Aorta (tissue), 5 donors: ENCODE measurements at regions of chr7 and their contacts with region 1.

Region 1: GRCh38 chr7:158818325-158819213 is 10.7 kb downstream of the ESYT2 start:
- DNase-seq: peak; percentile 94 to 96
- ATAC-seq: peak; percentile 90
- H3K4me3 ChIP-seq: no peak overlapping the region
- H3K27ac ChIP-seq: peak overlapping the region; percentile 44 to 94
- H3K4me1 ChIP-seq: peaks cover 3 to 7% of the 10 kb centered on the region in 2 donors
- H3K27me3 ChIP-seq: no peaks in the 10 kb centered on the region

Region 2: DNA sequence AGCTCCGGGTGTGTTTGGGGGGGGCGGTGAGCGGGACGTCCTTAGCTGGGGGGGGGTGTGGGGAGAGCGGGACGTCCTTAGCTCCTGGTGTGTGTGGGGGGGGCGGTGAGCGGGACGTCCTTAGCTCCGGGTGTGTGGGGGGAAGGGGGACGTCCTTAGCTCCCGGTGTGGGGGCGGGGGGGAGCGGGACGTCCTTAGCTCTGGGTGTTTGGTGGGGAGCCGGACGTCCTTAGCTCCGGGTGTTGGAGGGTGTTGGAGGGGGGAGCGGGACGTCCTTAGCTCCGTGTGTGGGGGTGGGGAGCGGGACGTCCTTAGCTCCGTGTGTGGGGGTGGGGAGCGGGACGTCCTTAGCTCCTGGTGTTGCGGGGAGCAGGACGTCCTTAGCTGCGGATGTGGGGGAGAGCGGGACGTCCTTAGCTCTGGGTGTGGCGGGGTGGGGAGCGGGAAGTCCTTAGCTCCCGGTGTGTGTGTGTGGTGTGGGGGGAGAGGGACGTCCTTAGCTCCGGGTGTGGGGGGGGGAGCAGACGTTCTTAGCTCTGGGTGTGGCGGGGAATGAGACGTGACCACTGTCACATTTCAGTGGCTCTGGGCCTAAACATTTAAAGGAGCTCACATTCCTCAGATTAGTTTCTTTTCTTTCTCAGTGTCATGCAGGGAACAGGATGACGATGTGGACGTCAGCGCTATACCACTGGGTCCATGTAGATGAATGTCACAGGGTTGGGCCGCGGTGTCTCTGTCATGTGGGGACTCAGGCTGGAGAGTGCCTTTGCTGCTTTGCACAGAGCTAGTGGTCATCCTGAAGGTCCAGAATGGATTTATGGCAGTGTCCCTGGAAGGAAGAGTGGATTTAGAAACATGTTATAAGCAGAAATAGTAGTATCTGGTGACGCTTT is 45.3 kb after region 1 on chr7:
- intact Hi-C with region 1: no loop called
- DNase-seq: peak; percentile 86
- ATAC-seq: peak; percentile 87
- H3K4me3 ChIP-seq: peak overlapping the region; percentile 47 to 50
- H3K27ac ChIP-seq: peak overlapping the region in 1 of 2 donors; percentile 51
- H3K4me1 ChIP-seq: no peaks in the 10 kb centered on the region
- H3K27me3 ChIP-seq: no peaks in the 10 kb centered on the region

Region 3: DNA sequence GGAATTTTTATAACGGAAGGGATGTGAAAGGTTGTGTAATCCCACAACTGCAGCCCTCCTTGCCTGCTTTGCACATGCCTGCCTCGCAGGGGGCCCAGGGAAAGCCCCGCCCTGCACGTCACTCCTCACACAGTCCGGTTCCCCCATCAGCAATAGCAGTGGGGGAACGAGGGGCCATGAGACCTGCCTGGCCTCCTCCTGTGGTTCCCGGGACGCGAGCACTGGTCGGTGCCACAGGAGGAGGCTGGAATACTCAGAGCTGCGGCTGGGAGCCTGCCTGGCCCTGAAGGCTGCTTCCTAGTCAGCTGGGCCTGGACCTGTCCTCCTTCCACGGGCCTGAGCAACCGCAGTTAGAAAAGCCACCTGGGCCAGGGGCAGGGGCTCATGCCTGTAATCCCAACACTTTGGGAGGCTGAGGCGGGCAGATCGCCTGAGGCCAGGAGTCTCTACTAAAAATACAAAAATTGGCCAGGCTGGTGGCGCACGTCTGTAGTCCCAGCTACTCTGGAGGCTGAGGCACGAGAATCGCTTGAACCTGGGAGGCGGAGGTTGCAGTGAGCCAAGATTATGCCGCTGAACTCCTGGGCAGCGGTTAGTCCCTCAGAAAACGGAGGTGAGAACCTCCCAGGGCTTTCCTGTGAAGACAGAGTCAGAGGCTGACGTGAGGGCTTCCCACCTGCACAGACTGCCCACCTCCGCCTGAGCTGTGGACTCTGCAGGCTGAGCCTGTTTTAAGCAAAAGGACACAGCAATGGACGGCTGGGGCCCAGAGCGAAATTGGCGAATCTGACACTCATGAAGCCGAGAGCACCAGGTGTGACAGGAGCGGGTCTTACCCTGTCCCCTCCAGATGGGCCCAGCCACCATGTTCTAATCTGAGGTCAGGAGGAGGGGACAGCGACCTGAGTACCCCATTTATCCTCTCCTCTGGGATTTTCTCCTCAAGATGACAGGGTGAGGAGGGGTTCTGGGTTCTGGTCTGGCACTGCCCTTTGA is 273.2 kb after region 1 on chr7:
- intact Hi-C with region 1: loop called in 1 of 2 experiments (anchors 2 kb)
- DNase-seq: peak in 1 of 2 donors; percentile 64
- ATAC-seq: peak; percentile 1
- H3K4me3 ChIP-seq: no peak overlapping the region
- H3K27ac ChIP-seq: peak overlapping the region; percentile 62 to 89
- H3K4me1 ChIP-seq: no peaks in the 10 kb centered on the region
- H3K27me3 ChIP-seq: no peaks in the 10 kb centered on the region